ENCODE measurements at regions of chr1 and their contacts with region 1.

Region 1: GRCh38 chr1:153670859-153671627 is at the start of gene ILF2:
- DNase-seq: peak; percentile 100
- H3K4me3 Mint-ChIP-seq: no peak within 1 kb of the TSS
- H3K27ac Mint-ChIP-seq: no peak within 1 kb of the TSS
- H3K4me1 Mint-ChIP-seq: peaks cover 5% of the 10 kb centered on the region
- H3K27me3 Mint-ChIP-seq: no peaks in the 10 kb centered on the region
- CTCF ChIP-seq: peak; percentile 27
- total RNA-seq, gene ILF2: 348 and 374 TPM in 2 replicates

Region 2: GRCh38 chr1:153532769-153533599 is 138.1 kb before region 1 on chr1:
- CTCF ChIA-PET with region 1: no interaction called
- POLR2A ChIA-PET with region 1: interaction called, 4 read pairs
- intact Hi-C with region 1: loop called (anchors 5 kb)
- DNase-seq: peak; percentile 97
- H3K4me3 Mint-ChIP-seq: peak overlapping the region; percentile 99
- H3K27ac Mint-ChIP-seq: peak overlapping the region; percentile 75
- H3K4me1 Mint-ChIP-seq: peaks cover 47% of the 10 kb centered on the region
- H3K27me3 Mint-ChIP-seq: no peaks in the 10 kb centered on the region
- CTCF ChIP-seq: peak; percentile 93

Region 3: GRCh38 chr1:153608742-153609584 is 62.1 kb before region 1 on chr1:
- CTCF ChIA-PET with region 1: interaction called, 4 read pairs
- POLR2A ChIA-PET with region 1: interaction called, 80 read pairs
- intact Hi-C with region 1: loop called (anchors 1 kb)
- DNase-seq: peak; percentile 99
- H3K4me3 Mint-ChIP-seq: peak overlapping the region; percentile 90
- H3K27ac Mint-ChIP-seq: peak overlapping the region; percentile 94
- H3K4me1 Mint-ChIP-seq: peaks cover 45% of the 10 kb centered on the region
- H3K27me3 Mint-ChIP-seq: no peaks in the 10 kb centered on the region
- CTCF ChIP-seq: no peak

Region 4: GRCh38 chr1:153649863-153650235 is 21.2 kb before region 1 on chr1:
- CTCF ChIA-PET with region 1: interaction called, 4 read pairs
- POLR2A ChIA-PET with region 1: interaction called, 27 read pairs
- intact Hi-C with region 1: no loop called
- DNase-seq: peak; percentile 54
- H3K4me3 Mint-ChIP-seq: no peak overlapping the region
- H3K27ac Mint-ChIP-seq: peak overlapping the region; percentile 10
- H3K4me1 Mint-ChIP-seq: peaks cover 13% of the 10 kb centered on the region
- H3K27me3 Mint-ChIP-seq: no peaks in the 10 kb centered on the region
- CTCF ChIP-seq: no peak

Region 5: DNA sequence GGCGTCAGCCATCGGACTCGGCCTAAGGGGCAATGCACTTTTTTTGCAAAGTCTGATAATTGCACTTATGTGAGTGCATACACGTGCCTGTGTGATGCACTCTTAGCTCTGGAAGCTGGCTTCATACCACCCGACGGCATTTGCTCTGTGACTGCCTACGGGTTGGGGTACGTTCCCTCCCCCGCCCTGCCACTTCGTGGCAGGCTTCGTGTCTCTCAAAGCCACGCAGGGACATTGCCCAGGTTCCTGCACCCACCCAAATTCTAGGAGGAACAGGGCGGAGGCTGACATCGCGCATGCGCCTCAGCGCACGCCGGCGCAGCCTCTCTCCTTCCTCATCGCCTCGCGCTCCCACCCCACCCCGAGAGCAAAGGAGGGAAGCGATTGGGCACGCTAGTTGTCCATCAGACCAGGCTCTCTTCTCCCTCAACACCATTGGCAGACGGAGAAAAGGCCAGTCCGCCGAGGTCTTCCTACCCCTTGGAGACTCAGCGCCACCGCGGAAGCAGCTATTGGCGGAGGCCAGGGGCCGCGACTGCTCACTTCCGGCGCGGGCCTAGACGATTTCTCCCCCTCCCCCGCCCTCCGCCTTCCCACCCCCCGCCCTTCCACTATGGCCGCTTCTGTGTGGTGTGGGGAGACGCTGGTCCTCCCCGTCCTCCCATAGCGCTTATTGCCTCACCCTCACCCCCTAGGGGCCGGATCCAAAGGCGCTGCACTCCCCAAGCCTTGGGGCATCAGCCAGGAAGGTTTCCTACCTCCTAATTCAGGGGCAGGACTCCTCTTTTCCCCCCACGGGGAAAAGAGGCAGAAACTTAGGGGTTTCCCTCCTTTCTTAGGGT is 56.6 kb after region 1 on chr1 and contains the start of gene INTS3:
- CTCF ChIA-PET with region 1: interaction called, 3 read pairs
- POLR2A ChIA-PET with region 1: interaction called, 13 read pairs
- intact Hi-C with region 1: loop called (anchors 5 kb)
- DNase-seq: peak; percentile 100
- H3K4me3 Mint-ChIP-seq: peak within 1 kb of the TSS; percentile 99
- H3K27ac Mint-ChIP-seq: peak within 1 kb of the TSS; percentile 98
- H3K4me1 Mint-ChIP-seq: peaks cover 21% of the 10 kb centered on the region
- H3K27me3 Mint-ChIP-seq: no peaks in the 10 kb centered on the region
- CTCF ChIP-seq: no peak
- total RNA-seq, gene INTS3: 68.7 and 88.3 TPM in 2 replicates

Region 6: DNA sequence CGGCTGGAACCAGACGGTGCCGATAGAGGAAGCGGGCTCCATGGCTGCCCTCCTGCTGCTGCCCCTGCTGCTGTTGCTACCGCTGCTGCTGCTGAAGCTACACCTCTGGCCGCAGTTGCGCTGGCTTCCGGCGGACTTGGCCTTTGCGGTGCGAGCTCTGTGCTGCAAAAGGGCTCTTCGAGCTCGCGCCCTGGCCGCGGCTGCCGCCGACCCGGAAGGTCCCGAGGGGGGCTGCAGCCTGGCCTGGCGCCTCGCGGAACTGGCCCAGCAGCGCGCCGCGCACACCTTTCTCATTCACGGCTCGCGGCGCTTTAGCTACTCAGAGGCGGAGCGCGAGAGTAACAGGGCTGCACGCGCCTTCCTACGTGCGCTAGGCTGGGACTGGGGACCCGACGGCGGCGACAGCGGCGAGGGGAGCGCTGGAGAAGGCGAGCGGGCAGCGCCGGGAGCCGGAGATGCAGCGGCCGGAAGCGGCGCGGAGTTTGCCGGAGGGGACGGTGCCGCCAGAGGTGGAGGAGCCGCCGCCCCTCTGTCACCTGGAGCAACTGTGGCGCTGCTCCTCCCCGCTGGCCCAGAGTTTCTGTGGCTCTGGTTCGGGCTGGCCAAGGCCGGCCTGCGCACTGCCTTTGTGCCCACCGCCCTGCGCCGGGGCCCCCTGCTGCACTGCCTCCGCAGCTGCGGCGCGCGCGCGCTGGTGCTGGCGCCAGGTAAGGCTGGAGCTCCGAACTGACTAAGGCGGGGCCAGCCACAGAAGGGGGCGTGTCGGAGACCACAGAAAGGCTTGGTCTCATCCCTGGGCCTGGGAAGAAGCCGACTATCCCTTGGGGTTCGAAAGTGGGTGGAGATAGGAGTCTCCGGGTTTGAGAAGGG is 104.7 kb after region 1 on chr1:
- CTCF ChIA-PET with region 1: interaction called, 5 read pairs
- POLR2A ChIA-PET with region 1: interaction called, 11 read pairs
- intact Hi-C with region 1: no loop called
- DNase-seq: peak; percentile 81
- H3K4me3 Mint-ChIP-seq: peak overlapping the region; percentile 70
- H3K27ac Mint-ChIP-seq: peak overlapping the region; percentile 68
- H3K4me1 Mint-ChIP-seq: peaks cover 36% of the 10 kb centered on the region
- H3K27me3 Mint-ChIP-seq: no peaks in the 10 kb centered on the region
- CTCF ChIP-seq: no peak

Region 7: DNA sequence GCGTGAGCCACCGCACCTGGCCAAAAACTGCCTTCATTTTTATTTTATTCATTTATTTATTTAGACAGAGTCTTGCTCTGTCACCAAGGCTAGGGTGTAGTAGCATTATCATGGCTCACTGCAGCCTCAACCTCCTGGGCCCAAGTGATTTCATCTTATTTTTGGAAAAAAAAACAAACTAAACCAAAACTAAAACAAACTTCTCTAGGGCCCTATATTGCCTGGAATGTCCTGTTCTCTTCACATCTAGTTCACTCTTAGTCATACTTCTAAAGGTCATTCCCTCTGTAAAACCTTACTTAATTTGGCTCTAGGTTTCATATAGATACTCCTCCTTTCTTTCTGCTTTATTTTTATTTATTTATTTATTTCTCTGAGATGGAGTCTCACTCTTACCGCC is 335.1 kb after region 1 on chr1:
- CTCF ChIA-PET with region 1: no interaction called
- POLR2A ChIA-PET with region 1: no interaction called
- intact Hi-C with region 1: no loop called
- DNase-seq: peak; percentile 30
- H3K4me3 Mint-ChIP-seq: no peak overlapping the region
- H3K27ac Mint-ChIP-seq: no peak overlapping the region
- H3K4me1 Mint-ChIP-seq: no peaks in the 10 kb centered on the region
- H3K27me3 Mint-ChIP-seq: no peaks in the 10 kb centered on the region
- CTCF ChIP-seq: no peak